MCF 10A (cell line): ENCODE measurements at regions of chr4 and their contacts with region 1.

Region 1: GRCh38 chr4:60201057-60201673 is 999.0 kb upstream of the ADGRL3 start:
- DNase-seq: peak; percentile 74
- H3K4me3 Mint-ChIP-seq: no peak overlapping the region
- H3K27ac Mint-ChIP-seq: no peak overlapping the region
- H3K4me1 Mint-ChIP-seq: peaks cover 6% of the 10 kb centered on the region
- H3K27me3 Mint-ChIP-seq: no peaks in the 10 kb centered on the region
- CTCF ChIP-seq: peak; percentile 75

Region 2: GRCh38 chr4:58732973-58733372 is 1468.2 kb before region 1 on chr4:
- CTCF ChIA-PET with region 1: no interaction called
- POLR2A ChIA-PET with region 1: no interaction called
- intact Hi-C with region 1: loop called (anchors 5 kb)
- DNase-seq: peak; percentile 15
- H3K4me3 Mint-ChIP-seq: no peak overlapping the region
- H3K27ac Mint-ChIP-seq: no peak overlapping the region
- H3K4me1 Mint-ChIP-seq: no peaks in the 10 kb centered on the region
- H3K27me3 Mint-ChIP-seq: no peaks in the 10 kb centered on the region
- CTCF ChIP-seq: peak; percentile 7

Region 3: GRCh38 chr4:59247032-59247431 is 954.1 kb before region 1 on chr4:
- CTCF ChIA-PET with region 1: interaction called, 6 read pairs
- POLR2A ChIA-PET with region 1: no interaction called
- intact Hi-C with region 1: loop called (anchors 1 kb)
- DNase-seq: peak; percentile 16
- H3K4me3 Mint-ChIP-seq: no peak overlapping the region
- H3K27ac Mint-ChIP-seq: no peak overlapping the region
- H3K4me1 Mint-ChIP-seq: no peaks in the 10 kb centered on the region
- H3K27me3 Mint-ChIP-seq: no peaks in the 10 kb centered on the region
- CTCF ChIP-seq: peak; percentile 45

Region 4: GRCh38 chr4:59612235-59612634 is 588.9 kb before region 1 on chr4:
- CTCF ChIA-PET with region 1: no interaction called
- POLR2A ChIA-PET with region 1: no interaction called
- intact Hi-C with region 1: loop called (anchors 10 kb)
- DNase-seq: peak; percentile 87
- H3K4me3 Mint-ChIP-seq: no peak overlapping the region
- H3K27ac Mint-ChIP-seq: no peak overlapping the region
- H3K4me1 Mint-ChIP-seq: no peaks in the 10 kb centered on the region
- H3K27me3 Mint-ChIP-seq: no peaks in the 10 kb centered on the region
- CTCF ChIP-seq: no peak

Region 5: GRCh38 chr4:60122820-60123219 is 78.3 kb before region 1 on chr4:
- CTCF ChIA-PET with region 1: no interaction called
- POLR2A ChIA-PET with region 1: no interaction called
- intact Hi-C with region 1: no loop called
- DNase-seq: no peak
- H3K4me3 Mint-ChIP-seq: no peak overlapping the region
- H3K27ac Mint-ChIP-seq: no peak overlapping the region
- H3K4me1 Mint-ChIP-seq: no peaks in the 10 kb centered on the region
- H3K27me3 Mint-ChIP-seq: no peaks in the 10 kb centered on the region
- CTCF ChIP-seq: no peak

Region 6: DNA sequence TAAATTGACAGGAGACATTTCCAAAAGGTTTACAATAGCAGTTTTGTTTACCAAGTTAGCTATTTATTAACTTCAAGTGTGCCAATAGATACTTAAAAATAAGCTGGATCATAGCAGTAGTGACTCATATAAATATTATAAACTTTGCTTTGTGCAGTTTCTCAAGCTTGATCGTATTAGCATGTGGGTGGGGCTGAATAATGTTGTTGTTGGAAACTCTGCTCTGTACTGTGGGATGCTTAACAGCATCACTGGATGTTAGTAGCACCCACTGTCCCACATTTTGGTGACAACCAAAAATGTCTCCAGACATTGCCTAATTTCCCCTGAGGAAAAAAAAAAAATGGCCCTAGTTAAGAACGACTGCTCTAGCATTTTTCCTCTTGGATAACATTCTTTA is 143.7 kb after region 1 on chr4:
- CTCF ChIA-PET with region 1: no interaction called
- POLR2A ChIA-PET with region 1: no interaction called
- intact Hi-C with region 1: no loop called
- DNase-seq: peak; percentile 17
- H3K4me3 Mint-ChIP-seq: no peak overlapping the region
- H3K27ac Mint-ChIP-seq: no peak overlapping the region
- H3K4me1 Mint-ChIP-seq: no peaks in the 10 kb centered on the region
- H3K27me3 Mint-ChIP-seq: no peaks in the 10 kb centered on the region
- CTCF ChIP-seq: no peak

Region 7: GRCh38 chr4:60463857-60464502 is 262.8 kb after region 1 on chr4:
- CTCF ChIA-PET with region 1: no interaction called
- POLR2A ChIA-PET with region 1: no interaction called
- intact Hi-C with region 1: loop called (anchors 10 kb)
- DNase-seq: peak; percentile 51
- H3K4me3 Mint-ChIP-seq: no peak overlapping the region
- H3K27ac Mint-ChIP-seq: no peak overlapping the region
- H3K4me1 Mint-ChIP-seq: no peaks in the 10 kb centered on the region
- H3K27me3 Mint-ChIP-seq: no peaks in the 10 kb centered on the region
- CTCF ChIP-seq: peak; percentile 48